Activated CD8-positive, alpha-beta T cell treated with anti-CD3 and anti-CD28 coated beads, Interleukin-2, amount 10 ng/mL, durations not matched to agents 7 days and 5 days (primary cell): ENCODE measurements at regions of chr1 and their contacts with region 1.

Region 1: GRCh38 chr1:205255941-205256780 is 28.4 kb downstream of the TMCC2 start:
- DNase-seq: peak; percentile 88
- ATAC-seq: peak; percentile 94
- H3K4me3 Mint-ChIP-seq: no peak overlapping the region
- H3K27ac Mint-ChIP-seq: no peak overlapping the region
- H3K4me1 Mint-ChIP-seq: peaks cover 5% of the 10 kb centered on the region
- H3K27me3 Mint-ChIP-seq: peaks cover 2% of the 10 kb centered on the region

Region 2: GRCh38 chr1:204975570-204976235 is 280.5 kb before region 1 on chr1:
- CTCF ChIA-PET with region 1: interaction called, 14 read pairs
- POLR2A ChIA-PET with region 1: no interaction called
- DNase-seq: peak; percentile 58
- ATAC-seq: peak; percentile 81
- H3K4me3 Mint-ChIP-seq: no peak overlapping the region
- H3K27ac Mint-ChIP-seq: no peak overlapping the region
- H3K4me1 Mint-ChIP-seq: peaks cover 21% of the 10 kb centered on the region
- H3K27me3 Mint-ChIP-seq: peaks cover 11% of the 10 kb centered on the region

Region 3: DNA sequence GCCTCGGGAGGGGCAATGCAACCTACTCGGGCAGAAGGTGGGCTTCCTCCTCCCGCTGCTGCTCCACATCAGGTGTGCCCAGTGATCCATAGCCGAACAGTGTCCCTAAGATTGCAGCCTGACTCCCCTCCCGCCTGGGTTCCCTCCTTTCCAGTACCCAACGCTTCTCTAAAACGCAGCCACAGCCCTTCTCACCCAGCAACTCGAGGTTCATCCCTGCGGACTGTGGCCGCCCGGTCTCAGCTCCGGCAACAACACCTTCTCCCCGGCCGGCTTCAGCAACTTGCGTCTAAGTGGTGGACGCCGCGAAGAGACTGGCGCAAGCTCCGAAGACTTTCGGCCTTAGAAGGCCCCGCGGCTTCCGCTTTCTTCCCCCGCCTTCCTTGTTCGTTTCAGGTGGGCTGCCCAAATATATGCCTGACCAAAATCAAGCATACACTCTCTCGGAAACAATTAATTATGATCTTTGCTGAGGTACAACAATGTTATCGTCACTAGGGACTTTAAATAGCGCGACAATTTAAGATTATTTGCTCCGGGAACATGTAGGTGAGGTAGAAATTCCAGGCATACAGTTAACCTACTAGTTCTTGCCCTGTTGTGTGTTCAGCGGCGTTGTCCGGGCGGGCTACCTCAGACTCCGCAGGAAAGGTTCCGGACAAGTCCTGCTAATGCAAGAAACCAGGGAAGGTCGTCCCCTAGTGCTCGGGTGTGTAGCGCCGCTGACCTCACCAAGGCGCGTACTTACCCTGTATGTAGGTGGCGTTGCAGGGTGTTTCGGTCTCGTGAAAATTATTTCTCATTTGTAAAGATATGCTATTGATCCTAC is 134.3 kb before region 1 on chr1 and contains the start of gene RBBP5:
- CTCF ChIA-PET with region 1: interaction called, 29 read pairs
- POLR2A ChIA-PET with region 1: interaction called, 4 read pairs
- DNase-seq: peak; percentile 96
- ATAC-seq: peak; percentile 98
- H3K4me3 Mint-ChIP-seq: peak within 1 kb of the TSS; percentile 96
- H3K27ac Mint-ChIP-seq: peak within 1 kb of the TSS; percentile 99
- H3K4me1 Mint-ChIP-seq: peaks cover 39% of the 10 kb centered on the region
- H3K27me3 Mint-ChIP-seq: no peaks in the 10 kb centered on the region
- total RNA-seq, gene RBBP5: 20.3 to 22.0 TPM

Region 4: GRCh38 chr1:205199090-205199930 is 56.9 kb before region 1 on chr1:
- CTCF ChIA-PET with region 1: interaction called, 17 read pairs
- POLR2A ChIA-PET with region 1: no interaction called
- DNase-seq: peak; percentile 43
- ATAC-seq: peak; percentile 83
- H3K4me3 Mint-ChIP-seq: peak overlapping the region; percentile 62
- H3K27ac Mint-ChIP-seq: peak overlapping the region; percentile 71
- H3K4me1 Mint-ChIP-seq: peaks cover 49% of the 10 kb centered on the region
- H3K27me3 Mint-ChIP-seq: no peaks in the 10 kb centered on the region

Region 5: DNA sequence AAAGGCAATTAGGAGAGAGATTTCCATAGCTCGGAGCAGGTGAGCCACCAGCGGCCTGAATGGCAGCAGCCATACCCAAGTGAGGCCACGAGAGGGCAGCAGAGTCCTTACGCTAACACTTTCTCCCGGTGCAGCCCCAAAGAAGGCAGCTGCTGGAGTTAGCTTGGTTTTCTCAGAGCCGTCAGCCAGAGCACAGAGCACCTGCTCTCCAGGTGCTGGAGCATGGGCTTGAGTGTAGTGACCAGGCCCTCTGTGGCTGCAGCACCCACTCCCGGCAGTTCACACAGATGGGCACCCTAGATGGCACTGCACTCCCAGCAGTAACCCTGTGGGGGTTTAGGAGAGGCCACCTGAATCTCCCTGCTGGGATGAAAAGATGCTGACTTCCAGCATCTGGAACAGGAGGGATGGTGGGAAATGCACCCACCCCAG is 17.4 kb after region 1 on chr1:
- CTCF ChIA-PET with region 1: interaction called, 51 read pairs
- POLR2A ChIA-PET with region 1: no interaction called
- DNase-seq: peak; percentile 89
- ATAC-seq: peak; percentile 93
- H3K4me3 Mint-ChIP-seq: no peak overlapping the region
- H3K27ac Mint-ChIP-seq: no peak overlapping the region
- H3K4me1 Mint-ChIP-seq: peaks cover 22% of the 10 kb centered on the region
- H3K27me3 Mint-ChIP-seq: peaks cover 11% of the 10 kb centered on the region

Region 6: GRCh38 chr1:205335643-205336091 is 79.5 kb after region 1 on chr1:
- CTCF ChIA-PET with region 1: interaction called, 14 read pairs
- POLR2A ChIA-PET with region 1: no interaction called
- DNase-seq: peak; percentile 84
- ATAC-seq: peak; percentile 90
- H3K4me3 Mint-ChIP-seq: no peak overlapping the region
- H3K27ac Mint-ChIP-seq: no peak overlapping the region
- H3K4me1 Mint-ChIP-seq: peaks cover 11% of the 10 kb centered on the region
- H3K27me3 Mint-ChIP-seq: peaks cover 38% of the 10 kb centered on the region